WTC11 (cell line): ENCODE measurements at regions of chr7 and their contacts with region 1.

Region 1: GRCh38 chr7:142338633-142339501 is 81.0 kb upstream of the PRSS58 start:
- DNase-seq: peak; percentile 88
- ATAC-seq: peak; percentile 99
- H3K4me3 Mint-ChIP-seq: no peak overlapping the region
- H3K27ac Mint-ChIP-seq: 0 out of 2 replicates have a peak overlapping the region, but pooled peaks have one; percentile 24
- H3K4me1 Mint-ChIP-seq: peaks cover 10% of the 10 kb centered on the region
- H3K27me3 Mint-ChIP-seq: no peaks in the 10 kb centered on the region
- CTCF ChIP-seq: peak; percentile 42; the same call in 1 of the 2 replicates

Region 2: GRCh38 chr7:142352543-142352942 is 13.7 kb after region 1 on chr7:
- CTCF ChIA-PET with region 1: interaction called, 21 read pairs
- POLR2A ChIA-PET with region 1: no interaction called
- DNase-seq: no peak
- ATAC-seq: no peak
- H3K4me3 Mint-ChIP-seq: no peak overlapping the region
- H3K27ac Mint-ChIP-seq: no peak overlapping the region
- H3K4me1 Mint-ChIP-seq: peaks cover under 1% of the 10 kb centered on the region
- H3K27me3 Mint-ChIP-seq: no peaks in the 10 kb centered on the region; the same call in 1 of the 2 replicates
- CTCF ChIP-seq: no peak

Region 3: GRCh38 chr7:142375666-142376313 is 36.9 kb after region 1 on chr7:
- CTCF ChIA-PET with region 1: interaction called, 32 read pairs
- POLR2A ChIA-PET with region 1: no interaction called
- DNase-seq: peak; percentile 81
- ATAC-seq: peak; percentile 97
- H3K4me3 Mint-ChIP-seq: no peak overlapping the region
- H3K27ac Mint-ChIP-seq: peak overlapping the region; percentile 22
- H3K4me1 Mint-ChIP-seq: peaks cover 20% of the 10 kb centered on the region
- H3K27me3 Mint-ChIP-seq: peaks cover 3% of the 10 kb centered on the region
- CTCF ChIP-seq: no peak; the same call in 1 of the 2 replicates

Region 4: GRCh38 chr7:142445019-142445686 is 106.3 kb after region 1 on chr7:
- CTCF ChIA-PET with region 1: interaction called, 15 read pairs
- POLR2A ChIA-PET with region 1: no interaction called
- DNase-seq: peak; percentile 80
- ATAC-seq: peak; percentile 96
- H3K4me3 Mint-ChIP-seq: no peak overlapping the region
- H3K27ac Mint-ChIP-seq: no peak overlapping the region
- H3K4me1 Mint-ChIP-seq: peaks cover 27% of the 10 kb centered on the region
- H3K27me3 Mint-ChIP-seq: no peaks in the 10 kb centered on the region
- CTCF ChIP-seq: peak; percentile 65

Region 5: DNA sequence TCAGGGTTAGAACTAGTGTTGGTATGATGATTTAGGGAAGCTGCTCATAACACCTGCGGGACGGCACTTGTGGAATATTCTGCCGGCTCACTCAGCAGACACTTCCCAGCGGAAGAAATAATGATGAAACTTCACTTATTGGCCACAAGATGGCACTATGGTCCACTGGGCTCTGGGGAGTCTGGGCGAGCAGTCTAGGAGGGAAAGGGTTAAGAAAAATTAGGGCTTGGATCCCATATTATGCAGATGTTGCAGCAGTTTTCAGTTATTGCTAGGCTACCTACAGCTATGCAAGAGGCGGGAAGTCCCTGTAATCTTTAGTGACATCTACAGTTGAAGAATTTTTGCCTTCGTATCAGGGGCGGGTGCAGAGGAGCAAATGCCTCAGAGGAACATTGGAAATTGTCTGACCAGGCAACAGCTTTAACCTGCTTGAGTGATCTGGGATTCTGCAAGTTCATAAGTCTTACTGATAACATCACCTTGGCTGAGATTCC is 157.7 kb after region 1 on chr7:
- CTCF ChIA-PET with region 1: interaction called, 12 read pairs
- POLR2A ChIA-PET with region 1: no interaction called
- DNase-seq: no peak
- ATAC-seq: peak; percentile 82
- H3K4me3 Mint-ChIP-seq: peak overlapping the region; percentile 45
- H3K27ac Mint-ChIP-seq: no peak overlapping the region
- H3K4me1 Mint-ChIP-seq: no peaks in the 10 kb centered on the region
- H3K27me3 Mint-ChIP-seq: peaks cover 17% of the 10 kb centered on the region
- CTCF ChIP-seq: peak; percentile 74

Region 6: GRCh38 chr7:142587578-142588191 is 248.8 kb after region 1 on chr7:
- CTCF ChIA-PET with region 1: interaction called, 19 read pairs
- POLR2A ChIA-PET with region 1: no interaction called
- DNase-seq: no peak
- ATAC-seq: peak; percentile 98
- H3K4me3 Mint-ChIP-seq: no peak overlapping the region
- H3K27ac Mint-ChIP-seq: no peak overlapping the region
- H3K4me1 Mint-ChIP-seq: peaks cover 10% of the 10 kb centered on the region
- H3K27me3 Mint-ChIP-seq: no peaks in the 10 kb centered on the region; the same call in 1 of the 2 replicates
- CTCF ChIP-seq: no peak

Region 7: GRCh38 chr7:143214789-143215679 is 876.2 kb after region 1 on chr7:
- CTCF ChIA-PET with region 1: interaction called, 10 read pairs
- POLR2A ChIA-PET with region 1: no interaction called
- DNase-seq: peak; percentile 44
- ATAC-seq: peak; percentile 99
- H3K4me3 Mint-ChIP-seq: no peak overlapping the region
- H3K27ac Mint-ChIP-seq: no peak overlapping the region
- H3K4me1 Mint-ChIP-seq: no peaks in the 10 kb centered on the region
- H3K27me3 Mint-ChIP-seq: no peaks in the 10 kb centered on the region
- CTCF ChIP-seq: peak; percentile 99